ENCODE measurements at regions of chr10 and their contacts with region 1.

Region 1: DNA sequence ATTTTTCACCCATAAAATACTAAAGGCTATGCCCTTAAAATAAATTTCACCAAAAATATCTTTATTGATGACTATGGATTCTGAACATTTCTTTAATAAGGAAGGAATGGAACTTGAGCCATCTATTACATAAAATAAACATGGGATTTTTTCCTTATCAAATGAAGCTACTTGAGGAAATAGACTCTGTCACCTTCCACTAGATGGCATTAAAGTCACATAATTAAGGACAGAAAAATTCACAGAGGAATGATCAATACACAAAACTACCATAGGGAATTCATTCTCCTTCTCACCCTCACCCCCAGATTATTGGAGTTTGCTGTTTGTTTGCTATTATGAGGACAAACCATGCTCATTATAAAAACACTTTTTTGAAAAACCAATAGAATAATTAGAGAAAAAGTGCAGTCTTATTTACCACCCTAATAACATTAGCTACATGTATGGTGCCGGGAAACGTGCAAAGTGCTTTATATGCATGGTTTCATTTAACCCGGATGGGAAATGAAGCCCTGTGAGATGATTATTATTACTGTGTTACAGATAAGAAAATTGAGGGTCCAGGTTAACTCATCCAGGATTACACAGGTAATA is 21.1 kb upstream of the FOXI2 start:
- DNase-seq: peak; percentile 42
- H3K27ac ChIP-seq: no peak overlapping the region
- CTCF ChIP-seq: peak; percentile 44; the same call in 1 of the 2 replicates

Region 2: DNA sequence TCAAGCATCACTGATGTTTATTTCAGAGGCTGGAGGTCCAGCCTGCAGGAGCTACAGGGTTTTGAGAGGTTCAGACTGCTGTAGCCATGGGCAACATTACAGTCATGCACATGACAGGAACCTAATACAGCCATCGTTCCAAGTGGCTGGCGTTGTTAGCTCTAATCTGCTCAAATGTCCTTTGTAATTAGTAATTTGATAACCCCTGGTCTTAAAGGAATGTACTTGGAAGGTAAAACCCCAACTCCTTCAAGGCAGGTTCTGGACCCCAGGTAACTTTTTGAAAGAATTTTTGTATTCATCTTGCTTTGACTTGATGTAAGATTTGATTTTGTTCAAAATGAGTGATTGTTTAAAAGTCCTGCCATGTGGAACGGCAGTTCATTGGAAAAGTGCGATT is 13.6 kb before region 1 on chr10:
- CTCF ChIA-PET with region 1: interaction called, 11 read pairs
- POLR2A ChIA-PET with region 1: no interaction called
- DNase-seq: no peak
- H3K27ac ChIP-seq: no peak overlapping the region
- CTCF ChIP-seq: no peak

Region 3: DNA sequence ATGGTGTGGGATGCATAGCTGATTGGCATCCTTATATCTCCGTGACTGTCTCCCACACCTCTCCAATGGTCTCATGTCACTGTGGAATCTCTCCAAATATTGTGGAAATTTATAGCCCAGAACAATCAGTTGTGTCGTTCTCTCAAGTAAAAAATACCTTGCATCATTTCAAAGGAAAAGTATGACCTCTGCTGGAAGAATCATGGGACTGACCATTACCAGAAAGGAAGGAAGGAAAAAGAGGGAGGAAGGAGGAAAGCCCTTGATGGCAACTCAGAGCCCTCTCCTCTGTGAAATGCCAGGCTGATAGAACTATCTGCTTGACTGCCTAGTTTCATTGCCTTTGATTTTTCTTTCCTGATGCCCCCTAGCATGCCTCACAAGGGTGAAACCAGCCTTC is 97.4 kb after region 1 on chr10:
- CTCF ChIA-PET with region 1: interaction called, 25 read pairs
- POLR2A ChIA-PET with region 1: no interaction called
- DNase-seq: no peak
- H3K27ac ChIP-seq: no peak overlapping the region
- CTCF ChIP-seq: no peak

Region 4: DNA sequence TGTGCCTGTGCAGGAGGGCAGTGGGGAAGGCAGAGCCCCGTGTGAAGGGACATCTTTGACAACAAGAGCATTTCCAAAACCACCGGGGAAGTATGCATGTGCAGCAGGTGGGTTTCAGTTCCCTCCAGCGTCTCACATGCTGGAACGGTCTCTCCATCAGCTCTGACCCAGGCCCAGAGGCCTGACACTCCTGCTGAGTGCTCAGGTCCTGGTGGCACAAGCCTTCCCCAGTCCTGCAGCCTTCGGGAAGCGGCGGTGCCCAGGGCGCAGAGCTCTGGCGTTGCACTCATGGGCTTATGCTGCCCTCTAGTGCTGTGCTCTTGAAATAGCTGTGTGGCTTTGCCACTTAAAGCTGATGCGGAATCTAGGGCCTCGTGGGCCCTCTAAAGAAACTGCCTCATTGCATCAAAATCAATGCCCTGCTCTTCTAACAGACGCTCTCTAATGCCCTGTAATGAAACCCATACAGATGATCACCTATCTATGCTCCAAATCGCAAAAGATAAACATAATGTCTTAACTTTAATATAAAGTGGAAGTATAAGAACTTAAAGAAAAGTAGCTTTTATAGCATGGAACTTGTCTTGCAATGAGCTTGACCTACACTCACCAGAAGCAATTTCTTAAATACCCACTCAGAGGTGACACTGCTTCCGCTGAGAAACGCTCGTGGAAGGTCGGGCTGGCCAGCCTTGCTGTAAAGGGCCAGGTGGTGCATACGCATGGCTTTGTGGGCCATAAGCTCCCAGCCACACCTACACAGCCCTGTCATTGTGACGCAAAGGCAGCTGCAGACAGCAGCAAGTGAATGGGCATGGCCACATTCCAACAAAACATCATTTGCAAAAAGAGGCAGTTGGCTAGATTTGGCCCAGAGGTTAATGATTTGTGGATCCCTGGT is 138.2 kb after region 1 on chr10:
- CTCF ChIA-PET with region 1: interaction called, 69 read pairs
- POLR2A ChIA-PET with region 1: no interaction called
- DNase-seq: peak; percentile 79
- H3K27ac ChIP-seq: no peak overlapping the region
- CTCF ChIP-seq: peak; percentile 90